H1 (cell line): ENCODE measurements at regions of chrX and their contacts with region 1.

Region 1: DNA sequence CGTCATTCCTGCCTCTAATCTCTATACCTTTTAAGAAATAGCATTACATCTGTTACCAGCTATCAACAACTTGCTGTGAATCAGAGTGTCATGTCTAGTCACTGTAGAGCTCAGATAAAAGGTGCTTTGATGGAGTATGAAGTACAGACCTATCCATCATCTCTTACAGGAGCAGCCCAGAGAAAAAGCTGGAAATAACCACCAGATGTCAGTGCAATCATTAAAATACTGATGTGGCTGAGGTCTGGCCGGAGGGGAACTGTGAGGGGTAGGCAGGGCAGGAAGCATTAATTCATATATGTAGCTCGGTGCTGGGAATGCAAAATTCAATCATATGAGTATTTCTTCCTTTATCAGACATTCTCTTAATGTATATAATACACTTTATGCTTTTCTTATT is 100.6 kb downstream of the AKAP4 start:
- DNase-seq: no peak
- H3K4me3 ChIP-seq: no peak overlapping the region
- H3K27ac ChIP-seq: no peak overlapping the region
- H3K4me1 ChIP-seq: no peaks in the 10 kb centered on the region
- H3K27me3 ChIP-seq: no peaks in the 10 kb centered on the region
- CTCF ChIP-seq: peak in 2 of 3 experiments; percentile 45 to 64; a peak in 3 of 4 replicates
- EP300 ChIP-seq: no peak
- POLR2A ChIP-seq: no peak
- RAD21 ChIP-seq: peak; percentile 77 to 84

Region 2: DNA sequence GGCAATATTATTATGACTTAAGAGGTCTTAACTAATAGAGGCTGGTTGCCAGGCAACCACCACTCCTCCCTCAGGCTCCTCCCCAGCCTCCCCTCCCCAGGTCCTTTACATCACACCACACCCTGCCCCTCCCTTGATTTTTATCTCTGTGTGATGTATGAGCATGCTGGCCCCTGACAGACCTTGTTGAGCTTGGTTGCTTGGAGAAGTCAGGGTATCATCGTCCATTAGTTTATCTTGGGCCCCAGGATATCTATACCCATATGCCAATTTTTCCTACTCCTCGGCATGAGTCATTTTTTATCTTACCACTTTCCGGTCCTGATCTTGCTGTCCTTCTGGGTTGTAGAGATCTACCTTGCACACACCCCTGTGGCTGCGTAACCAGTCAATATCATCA is 98.2 kb after region 1 on chrX:
- CTCF ChIA-PET with region 1: interaction called, 76 read pairs
- POLR2A ChIA-PET with region 1: no interaction called
- DNase-seq: no peak
- H3K4me3 ChIP-seq: no peak overlapping the region
- H3K27ac ChIP-seq: no peak overlapping the region
- H3K4me1 ChIP-seq: no peaks in the 10 kb centered on the region
- H3K27me3 ChIP-seq: no peaks in the 10 kb centered on the region
- CTCF ChIP-seq: no peak
- EP300 ChIP-seq: no peak
- POLR2A ChIP-seq: no peak
- RAD21 ChIP-seq: no peak

Region 3: DNA sequence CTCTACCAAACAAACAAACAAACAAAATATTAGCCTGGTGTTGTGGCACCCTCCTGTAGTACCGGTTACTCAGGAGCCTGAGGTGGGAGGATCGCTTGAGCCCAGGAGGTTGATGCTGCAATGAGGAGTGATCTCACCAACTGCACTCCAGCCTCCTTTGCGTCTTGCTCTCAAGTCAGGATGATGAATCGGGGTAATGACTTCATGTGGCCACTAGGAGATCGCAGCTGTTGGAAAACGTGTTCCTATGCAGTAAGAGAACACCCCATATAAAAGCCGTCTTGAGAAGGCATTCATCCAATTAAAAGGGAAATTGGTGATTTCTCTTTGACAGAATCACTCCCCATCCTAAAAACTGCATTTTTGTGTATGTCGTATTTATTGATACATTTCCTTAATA is 111.3 kb after region 1 on chrX:
- CTCF ChIA-PET with region 1: interaction called, 76 read pairs
- POLR2A ChIA-PET with region 1: no interaction called
- DNase-seq: no peak
- H3K4me3 ChIP-seq: no peak overlapping the region
- H3K27ac ChIP-seq: no peak overlapping the region
- H3K4me1 ChIP-seq: no peaks in the 10 kb centered on the region
- H3K27me3 ChIP-seq: no peaks in the 10 kb centered on the region
- CTCF ChIP-seq: peak; percentile 23 to 47 (median 25); a peak in 3 of 4 replicates
- EP300 ChIP-seq: no peak
- POLR2A ChIP-seq: no peak
- RAD21 ChIP-seq: peak; percentile 34 to 43